Naive thymus-derived CD4-positive, alpha-beta T cell (primary cell): ENCODE measurements at regions of chr22 and their contacts with region 1.

Region 1: DNA sequence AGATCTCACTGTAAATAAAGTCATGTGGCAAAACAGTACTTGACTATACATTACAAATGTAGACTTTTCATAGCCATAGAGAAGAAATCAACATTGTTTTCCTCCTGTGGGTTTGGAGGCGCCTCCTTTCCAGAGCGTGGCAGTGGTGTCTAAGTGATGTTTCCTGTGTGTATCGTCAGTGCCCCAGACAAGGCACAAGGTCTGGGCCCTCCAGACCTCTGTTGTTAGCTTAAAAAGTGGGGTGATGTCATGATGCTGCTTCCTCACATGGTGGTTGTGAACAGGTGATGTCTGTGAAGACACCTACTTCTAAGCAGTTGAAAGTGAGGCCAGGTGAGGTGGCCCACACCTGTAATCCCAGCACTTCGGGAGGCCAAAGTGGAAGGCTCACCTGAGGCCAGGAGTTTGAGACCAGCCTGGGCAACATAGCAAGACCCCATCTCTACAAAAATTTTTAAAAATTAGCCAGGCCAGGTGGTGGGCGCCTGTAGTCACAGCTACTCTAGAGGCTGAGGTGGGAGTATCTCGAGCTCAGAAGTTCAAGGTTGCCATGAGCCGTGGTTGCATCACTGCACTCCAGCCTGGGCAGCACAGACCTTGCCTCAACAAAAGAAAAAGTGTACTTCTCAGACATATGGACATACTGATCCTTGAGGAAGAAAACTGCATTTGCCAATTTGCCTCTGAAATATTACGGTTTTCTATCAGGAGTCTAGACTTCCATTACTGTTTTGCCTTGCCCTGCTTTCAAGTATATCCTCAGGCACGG is 15.7 kb downstream of the NUP50 start:
- DNase-seq: peak in 7 of 9 donors; percentile 34 to 83 (median 70)
- ATAC-seq: peak; percentile 96
- H3K4me3 ChIP-seq: no peak overlapping the region
- H3K4me3 Mint-ChIP-seq: peak overlapping the region; percentile 19 to 71 (median 55)
- H3K27ac ChIP-seq: peak overlapping the region; percentile 58
- H3K27ac Mint-ChIP-seq: peak overlapping the region; percentile 71 to 97 (median 93)
- H3K4me1 ChIP-seq: peaks cover 6 to 42% of the 10 kb centered on the region in 2 donors
- H3K4me1 Mint-ChIP-seq: peaks cover 31 to 73% (median 66%) of the 10 kb centered on the region in 7 donors
- H3K27me3 ChIP-seq: no peaks in the 10 kb centered on the region
- H3K27me3 Mint-ChIP-seq: no peaks in the 10 kb centered on the region

Region 2: GRCh38 chr22:45163451-45164269 is 15.8 kb before region 1 on chr22 and contains the start of gene NUP50:
- CTCF ChIA-PET with region 1: interaction called, 3 read pairs
- POLR2A ChIA-PET with region 1: interaction called, 33 read pairs
- intact Hi-C with region 1: loop called in 1 of 2 experiments (anchors 2 kb)
- DNase-seq: peak; percentile 93 to 98 (median 97)
- ATAC-seq: peak; percentile 89
- H3K4me3 ChIP-seq: peak within 1 kb of the TSS; percentile 81
- H3K4me3 Mint-ChIP-seq: peak within 1 kb of the TSS; percentile 85 to 100 (median 96)
- H3K27ac ChIP-seq: peak within 1 kb of the TSS; percentile 77
- H3K27ac Mint-ChIP-seq: peak within 1 kb of the TSS; percentile 88 to 97 (median 96)
- H3K4me1 ChIP-seq: peaks cover 26 to 30% of the 10 kb centered on the region in 2 donors
- H3K4me1 Mint-ChIP-seq: peaks cover 37 to 72% (median 63%) of the 10 kb centered on the region in 7 donors
- H3K27me3 ChIP-seq: no peaks in the 10 kb centered on the region
- H3K27me3 Mint-ChIP-seq: no peaks in the 10 kb centered on the region
- total RNA-seq, gene NUP50: 107 to 151 (median 130) TPM